HCT116 (cell line): ENCODE measurements at regions of chr21 and their contacts with region 1.

Region 1: GRCh38 chr21:34888569-34889319 is 160.4 kb downstream of the RUNX1 start:
- DNase-seq: peak; percentile 86
- ATAC-seq: peak; percentile 76
- H3K4me3 ChIP-seq: peak overlapping the region; percentile 68 to 81
- H3K27ac ChIP-seq: peak overlapping the region; percentile 93
- H3K4me1 ChIP-seq: peaks cover 21 to 46% of the 10 kb centered on the region in 2 experiments
- H3K27me3 ChIP-seq: no peaks in the 10 kb centered on the region
- CTCF ChIP-seq: no peak
- POLR2A ChIP-seq: peak; percentile 62
- RAD21 ChIP-seq: no peak

Region 2: DNA sequence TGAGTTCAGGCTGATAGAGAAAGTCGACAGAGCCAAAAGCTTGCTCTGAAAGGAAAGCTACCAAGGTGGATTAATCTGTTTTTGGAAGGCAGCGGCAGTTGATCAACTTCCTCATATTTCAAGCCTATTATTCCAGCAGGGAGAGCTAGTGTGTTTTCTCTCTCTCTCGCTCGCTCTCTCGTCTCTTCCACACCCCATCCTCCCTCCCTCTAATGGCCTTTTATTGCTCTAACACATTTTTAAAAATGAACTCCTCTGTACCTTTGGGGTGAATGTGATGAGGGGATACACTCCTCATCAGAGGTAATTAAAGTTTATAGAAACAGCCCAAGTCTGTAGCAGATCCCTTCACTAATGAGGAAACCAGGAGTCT is 93.6 kb before region 1 on chr21:
- CTCF ChIA-PET with region 1: interaction called, 3 read pairs
- POLR2A ChIA-PET with region 1: interaction called, 33 read pairs
- RAD21 ChIA-PET with region 1: no interaction called
- intact Hi-C with region 1: loop called (anchors 2 kb)
- DNase-seq: no peak
- ATAC-seq: peak; percentile 10
- H3K4me3 ChIP-seq: peak overlapping the region in 1 of 2 experiments; percentile 28; a peak in 1 of 4 replicates
- H3K27ac ChIP-seq: peak overlapping the region; percentile 61
- H3K4me1 ChIP-seq: peaks cover 50 to 57% of the 10 kb centered on the region in 2 experiments
- H3K27me3 ChIP-seq: no peaks in the 10 kb centered on the region
- CTCF ChIP-seq: peak in 2 of 3 experiments; percentile 6 to 13; a peak in 1 of 6 replicates
- POLR2A ChIP-seq: no peak
- RAD21 ChIP-seq: peak; percentile 25

Region 3: GRCh38 chr21:35051287-35051818 is 162.6 kb after region 1 on chr21:
- CTCF ChIA-PET with region 1: interaction called, 3 read pairs
- POLR2A ChIA-PET with region 1: interaction called, 5 read pairs
- RAD21 ChIA-PET with region 1: no interaction called
- intact Hi-C with region 1: loop called (anchors 5 kb)
- DNase-seq: peak; percentile 80
- ATAC-seq: peak; percentile 91
- H3K4me3 ChIP-seq: peak overlapping the region in 1 of 2 experiments; percentile 31; a peak in 2 of 4 replicates
- H3K27ac ChIP-seq: peak overlapping the region; percentile 43; the same call in 1 of the 2 replicates
- H3K4me1 ChIP-seq: peaks cover 27 to 50% of the 10 kb centered on the region in 2 experiments
- H3K27me3 ChIP-seq: no peaks in the 10 kb centered on the region
- CTCF ChIP-seq: peak; percentile 42 to 78 (median 75); a peak in 5 of 6 replicates
- POLR2A ChIP-seq: no peak
- RAD21 ChIP-seq: peak; percentile 76

Region 4: DNA sequence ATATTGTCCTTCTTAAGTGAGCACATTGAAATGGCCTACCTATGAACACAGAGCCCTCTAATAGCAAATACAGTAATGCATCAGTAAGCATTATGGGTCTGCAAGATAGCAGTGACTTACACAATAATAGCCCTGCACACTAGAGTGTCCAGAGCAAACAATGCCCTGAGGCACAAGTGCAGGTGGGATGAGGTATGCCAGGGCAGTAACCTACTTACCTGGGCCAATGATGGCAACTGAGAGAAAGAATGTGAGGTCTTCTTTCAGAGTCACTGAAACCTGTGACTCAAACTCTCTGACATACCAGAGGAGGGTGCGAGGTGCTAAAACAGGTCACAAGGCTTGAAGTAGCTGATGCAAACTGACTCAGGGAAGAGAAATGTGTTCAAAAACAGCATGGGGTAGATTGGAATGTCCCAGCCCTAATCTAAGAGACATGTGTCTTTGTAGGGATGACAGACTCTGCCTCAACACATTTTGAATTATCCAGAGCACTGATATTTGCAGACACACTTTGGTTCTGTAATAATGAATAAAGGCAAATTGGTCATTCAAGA is 328.8 kb after region 1 on chr21:
- CTCF ChIA-PET with region 1: interaction called, 5 read pairs
- POLR2A ChIA-PET with region 1: no interaction called
- RAD21 ChIA-PET with region 1: no interaction called
- intact Hi-C with region 1: loop called (anchors 5 kb)
- DNase-seq: peak; percentile 98
- ATAC-seq: peak; percentile 97
- H3K4me3 ChIP-seq: peak overlapping the region in 1 of 2 experiments; percentile 5; a peak in 1 of 4 replicates
- H3K27ac ChIP-seq: peak overlapping the region; percentile 68; the same call in 1 of the 2 replicates
- H3K4me1 ChIP-seq: peaks cover 28 to 46% of the 10 kb centered on the region in 2 experiments
- H3K27me3 ChIP-seq: no peaks in the 10 kb centered on the region
- CTCF ChIP-seq: no peak
- POLR2A ChIP-seq: no peak
- RAD21 ChIP-seq: peak; percentile 35; the same call in 1 of the 2 replicates

Region 5: GRCh38 chr21:35840197-35840799 is 951.6 kb after region 1 on chr21:
- CTCF ChIA-PET with region 1: interaction called, 12 read pairs
- POLR2A ChIA-PET with region 1: interaction called, 3 read pairs
- RAD21 ChIA-PET with region 1: no interaction called
- intact Hi-C with region 1: loop called (anchors 2 kb)
- DNase-seq: peak; percentile 72
- ATAC-seq: peak; percentile 73
- H3K4me3 ChIP-seq: no peak overlapping the region
- H3K27ac ChIP-seq: no peak overlapping the region
- H3K4me1 ChIP-seq: no peaks in the 10 kb centered on the region
- H3K27me3 ChIP-seq: no peaks in the 10 kb centered on the region
- CTCF ChIP-seq: peak; percentile 61 to 93 (median 81); a peak in 5 of 6 replicates
- POLR2A ChIP-seq: no peak
- RAD21 ChIP-seq: peak; percentile 85